Right cardiac atrium (tissue), 5 donors: ENCODE measurements at regions of chr7 and their contacts with region 1.

Region 1: GRCh38 chr7:116271963-116272839 is 61.9 kb downstream of the TES start:
- DNase-seq: peak in 2 of 3 donors; percentile 19 to 40
- ATAC-seq: peak; percentile 92 to 97
- H3K4me3 ChIP-seq: no peak overlapping the region
- H3K27ac ChIP-seq: peak overlapping the region; percentile 56
- H3K4me1 ChIP-seq: peaks cover 3% of the 10 kb centered on the region
- H3K27me3 ChIP-seq: no peaks in the 10 kb centered on the region

Region 2: GRCh38 chr7:116218051-116218645 is 54.1 kb before region 1 on chr7:
- intact Hi-C with region 1: no loop called
- DNase-seq: no peak
- ATAC-seq: peak in 1 of 2 donors; percentile 69
- H3K4me3 ChIP-seq: no peak overlapping the region
- H3K27ac ChIP-seq: no peak overlapping the region
- H3K4me1 ChIP-seq: peaks cover 2% of the 10 kb centered on the region
- H3K27me3 ChIP-seq: no peaks in the 10 kb centered on the region

Region 3: GRCh38 chr7:116316833-116317612 is 44.8 kb after region 1 on chr7:
- intact Hi-C with region 1: loop called in 1 of 4 experiments (anchors 5 kb)
- DNase-seq: peak; percentile 9 to 57 (median 43)
- ATAC-seq: peak; percentile 93 to 98
- H3K4me3 ChIP-seq: no peak overlapping the region
- H3K27ac ChIP-seq: peak overlapping the region; percentile 73
- H3K4me1 ChIP-seq: peaks cover 2% of the 10 kb centered on the region
- H3K27me3 ChIP-seq: no peaks in the 10 kb centered on the region